ENCODE measurements at regions of chr12 and their contacts with region 1.

Region 1: DNA sequence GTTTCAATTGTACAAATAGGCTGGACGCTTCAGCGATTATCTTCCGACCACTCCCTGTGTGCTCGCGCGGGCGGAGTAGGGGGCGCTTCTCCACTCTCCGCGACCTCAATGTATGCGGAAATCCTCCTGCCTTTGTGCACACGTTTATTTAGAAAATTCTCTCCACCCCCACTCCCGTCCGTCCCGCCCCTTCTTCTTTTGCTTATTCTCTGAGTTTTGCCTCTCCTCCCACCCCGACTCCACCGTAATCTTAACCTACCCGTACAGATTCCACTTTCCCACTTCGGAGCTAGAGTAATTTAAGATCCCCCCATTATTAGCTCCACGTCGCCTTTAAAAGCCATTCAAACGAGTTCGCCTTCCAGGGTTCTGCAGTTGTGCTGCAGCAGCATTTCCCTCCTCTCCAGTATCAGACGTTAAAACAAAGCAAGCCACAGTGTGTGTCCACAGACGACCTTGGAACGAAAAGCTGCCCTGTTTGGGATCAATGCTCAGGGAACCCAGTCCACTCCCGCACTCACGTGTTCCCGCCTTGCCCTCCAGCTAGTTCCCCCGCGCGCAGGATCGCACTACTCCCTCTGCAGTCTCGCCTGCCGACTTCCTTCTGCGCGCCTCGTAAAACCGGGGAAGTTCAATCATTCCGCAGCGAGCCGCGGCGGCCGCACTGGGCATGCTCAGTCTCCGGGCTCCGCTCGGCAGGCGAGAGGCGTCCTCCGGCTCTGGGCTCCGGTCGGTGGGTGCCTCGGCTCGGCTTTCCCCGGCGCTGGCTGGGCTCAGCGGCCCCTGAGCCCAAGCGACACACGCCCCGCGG is at the start of gene ANO6:
- DNase-seq: peak; percentile 88
- H3K4me3 ChIP-seq: peak within 1 kb of the TSS; percentile 65 to 88 (median 77)
- H3K27ac ChIP-seq: peak within 1 kb of the TSS; percentile 89
- H3K4me1 ChIP-seq: peaks cover 24% of the 10 kb centered on the region
- H3K27me3 ChIP-seq: no peaks in the 10 kb centered on the region
- CTCF ChIP-seq: peak in 1 of 2 donors; percentile 38
- total RNA-seq, gene ANO6: 57.0 to 77.5 TPM

Region 2: DNA sequence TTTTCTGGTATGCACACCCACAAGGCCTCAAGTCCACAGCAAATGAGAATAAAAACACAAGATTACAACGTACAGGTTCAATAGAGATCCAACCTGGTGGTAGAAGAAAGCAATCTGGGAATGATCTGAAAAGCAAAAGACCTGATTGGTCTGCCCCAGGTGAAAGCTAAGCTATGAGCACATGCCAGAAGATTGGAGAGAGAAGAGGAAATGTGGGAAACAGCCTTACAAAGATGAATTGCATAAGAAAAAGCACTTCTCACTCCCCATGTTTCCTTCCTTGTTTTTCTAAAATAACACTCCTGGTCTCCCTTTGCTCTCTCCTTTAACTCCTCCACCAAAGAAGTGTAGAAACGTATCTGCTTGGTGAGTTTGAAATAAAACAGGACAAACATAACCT is 77.0 kb before region 1 on chr12:
- CTCF ChIA-PET with region 1: no interaction called
- dilution Hi-C with region 1: no loop called
- in situ Hi-C with region 1: no loop called
- intact Hi-C with region 1: no loop called
- DNase-seq: no peak
- H3K4me3 ChIP-seq: no peak overlapping the region
- H3K27ac ChIP-seq: no peak overlapping the region
- H3K4me1 ChIP-seq: no peaks in the 10 kb centered on the region
- H3K27me3 ChIP-seq: no peaks in the 10 kb centered on the region
- CTCF ChIP-seq: no peak

Region 3: GRCh38 chr12:45234139-45234846 is 18.7 kb after region 1 on chr12:
- CTCF ChIA-PET with region 1: no interaction called
- dilution Hi-C with region 1: no loop called
- in situ Hi-C with region 1: no loop called
- intact Hi-C with region 1: loop called (anchors 1 kb)
- DNase-seq: peak; percentile 96
- H3K4me3 ChIP-seq: peak overlapping the region in 1 of 3 experiments; percentile 28
- H3K27ac ChIP-seq: peak overlapping the region; percentile 98
- H3K4me1 ChIP-seq: peaks cover 51% of the 10 kb centered on the region
- H3K27me3 ChIP-seq: no peaks in the 10 kb centered on the region
- CTCF ChIP-seq: no peak

Region 4: GRCh38 chr12:45268672-45269411 is 53.2 kb after region 1 on chr12:
- CTCF ChIA-PET with region 1: no interaction called
- dilution Hi-C with region 1: no loop called
- in situ Hi-C with region 1: no loop called
- intact Hi-C with region 1: loop called (anchors 1 kb)
- DNase-seq: peak; percentile 88
- H3K4me3 ChIP-seq: peak overlapping the region in 2 of 3 experiments; percentile 2 to 35
- H3K27ac ChIP-seq: peak overlapping the region; percentile 82
- H3K4me1 ChIP-seq: peaks cover 36% of the 10 kb centered on the region
- H3K27me3 ChIP-seq: no peaks in the 10 kb centered on the region
- CTCF ChIP-seq: peak; percentile 54 to 57

Region 5: DNA sequence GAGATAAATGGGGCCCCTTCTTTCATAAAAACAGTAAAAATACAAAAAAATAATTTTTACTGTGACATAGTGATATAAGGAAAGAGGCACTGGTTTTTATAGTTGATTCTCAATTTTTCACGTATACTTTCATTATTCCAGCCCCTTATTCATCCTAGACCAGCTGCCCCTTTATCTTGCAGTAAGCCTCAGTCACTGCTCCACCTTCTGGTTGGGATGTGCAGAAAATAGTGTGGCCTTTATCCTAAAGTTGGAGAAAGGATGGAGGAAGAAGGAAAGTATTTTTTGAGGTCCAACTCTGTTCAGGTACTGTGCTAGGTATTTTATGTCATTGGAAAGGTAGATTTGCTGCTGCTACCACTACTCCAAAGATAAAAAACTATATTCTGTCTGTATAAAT is 172.9 kb after region 1 on chr12:
- CTCF ChIA-PET with region 1: interaction called, 9 read pairs
- dilution Hi-C with region 1: no loop called
- in situ Hi-C with region 1: no loop called
- intact Hi-C with region 1: loop called (anchors 1 kb)
- DNase-seq: peak; percentile 16
- H3K4me3 ChIP-seq: no peak overlapping the region
- H3K27ac ChIP-seq: no peak overlapping the region
- H3K4me1 ChIP-seq: no peaks in the 10 kb centered on the region
- H3K27me3 ChIP-seq: no peaks in the 10 kb centered on the region
- CTCF ChIP-seq: peak; percentile 49 to 65